ENCODE measurements at regions of chr20 and their contacts with region 1.

Region 1: DNA sequence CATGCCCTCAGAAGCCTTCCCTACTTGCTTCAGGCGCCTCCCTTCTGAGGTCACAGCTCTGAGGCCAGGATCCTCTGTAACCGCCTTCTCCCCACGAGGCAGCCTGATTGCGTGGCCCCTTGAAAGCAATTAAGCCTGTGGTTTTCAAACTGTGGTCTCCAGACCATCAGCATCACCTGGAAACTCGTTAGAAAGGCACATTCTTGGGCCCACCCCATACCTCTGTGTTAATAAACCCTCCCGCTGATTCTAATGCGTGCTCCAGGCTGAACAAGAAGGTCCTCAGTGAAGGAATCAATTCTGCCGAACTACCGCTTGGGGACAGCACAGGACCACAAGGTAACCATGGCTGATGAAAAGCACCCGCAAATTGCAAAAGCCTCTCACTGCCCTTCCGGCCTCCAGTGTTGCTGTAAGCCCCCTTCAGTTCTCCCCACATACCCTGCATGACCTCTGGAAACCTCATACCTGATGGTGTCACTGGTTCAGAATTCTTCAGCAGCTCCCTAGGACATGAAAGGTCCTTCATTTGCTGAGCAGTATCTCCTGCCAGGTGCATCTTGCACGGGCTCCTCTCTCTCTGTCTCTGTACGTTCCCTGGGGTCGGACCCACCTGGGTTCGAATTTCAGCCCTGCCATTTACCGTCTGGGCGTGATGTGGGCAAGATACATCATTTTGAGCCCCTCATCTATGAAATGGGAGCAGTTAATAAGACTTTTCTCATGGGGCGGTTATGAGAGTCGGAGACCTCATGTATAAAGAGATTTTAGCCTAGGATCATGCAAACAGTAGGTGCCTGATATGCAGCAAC is 93.3 kb upstream of the RNF24 start:
- DNase-seq: peak; percentile 11 to 80 (median 41)
- ATAC-seq: peak; percentile 84 to 87 (median 86)
- H3K4me3 ChIP-seq: no peak overlapping the region
- H3K4me3 Mint-ChIP-seq: no peak overlapping the region
- H3K27ac ChIP-seq: no peak overlapping the region
- H3K27ac Mint-ChIP-seq: no peak overlapping the region
- H3K4me1 ChIP-seq: peaks cover 0 to 6% of the 10 kb centered on the region in 2 experiments
- H3K4me1 Mint-ChIP-seq: peaks cover 0 to 11% (median 4%) of the 10 kb centered on the region in 3 donors
- H3K27me3 ChIP-seq: peaks cover 0 to 31% of the 10 kb centered on the region in 2 experiments
- H3K27me3 Mint-ChIP-seq: peaks cover 0 to 4% of the 10 kb centered on the region in 2 donors

Region 2: DNA sequence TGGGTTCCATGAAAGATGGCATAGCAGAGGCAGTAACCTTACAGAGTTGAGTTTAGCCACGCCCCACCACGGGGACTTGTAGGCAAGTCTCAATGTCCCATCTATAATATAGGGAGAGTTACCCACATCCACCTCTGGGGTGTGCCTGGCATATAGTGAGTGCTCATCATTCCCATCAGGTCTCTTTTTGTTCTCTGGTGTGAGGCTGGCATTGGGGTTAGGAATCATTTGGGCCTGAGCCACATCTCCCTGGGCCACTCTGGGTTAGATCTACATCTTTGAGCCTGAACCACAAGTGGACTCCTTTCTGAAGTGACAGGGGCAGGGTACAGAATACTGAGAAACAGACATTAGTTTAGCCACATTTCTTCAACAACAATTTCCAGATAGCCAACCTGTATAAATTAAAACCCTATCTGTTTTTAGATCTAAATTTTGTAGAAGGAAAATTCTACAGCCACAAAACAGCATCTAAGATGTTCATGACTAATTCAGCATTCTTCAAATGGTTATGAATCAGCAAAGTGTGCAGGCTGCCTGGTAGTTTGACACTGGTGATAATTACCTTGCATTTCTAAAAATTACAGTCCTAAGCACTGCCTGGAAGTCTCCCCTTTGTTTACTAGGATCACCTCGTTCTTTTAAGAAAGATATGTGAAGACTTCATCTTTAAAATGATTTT is 113.5 kb before region 1 on chr20:
- CTCF ChIA-PET with region 1: no interaction called
- POLR2A ChIA-PET with region 1: no interaction called
- DNase-seq: peak in 6 of 35 experiments; percentile 7 to 34 (median 15)
- ATAC-seq: peak; percentile 37 to 72 (median 61)
- H3K4me3 ChIP-seq: no peak overlapping the region
- H3K4me3 Mint-ChIP-seq: no peak overlapping the region
- H3K27ac ChIP-seq: no peak overlapping the region
- H3K27ac Mint-ChIP-seq: peak overlapping the region; percentile 79 to 81
- H3K4me1 ChIP-seq: peaks cover 15% of the 10 kb centered on the region in 2 experiments
- H3K4me1 Mint-ChIP-seq: peaks cover 31 to 56% (median 54%) of the 10 kb centered on the region in 3 donors
- H3K27me3 ChIP-seq: no peaks in the 10 kb centered on the region
- H3K27me3 Mint-ChIP-seq: no peaks in the 10 kb centered on the region

Region 3: GRCh38 chr20:4006640-4007039 is 102.1 kb before region 1 on chr20:
- CTCF ChIA-PET with region 1: no interaction called
- POLR2A ChIA-PET with region 1: no interaction called
- DNase-seq: no peak
- ATAC-seq: no peak
- H3K4me3 ChIP-seq: no peak overlapping the region
- H3K4me3 Mint-ChIP-seq: no peak overlapping the region
- H3K27ac ChIP-seq: no peak overlapping the region
- H3K27ac Mint-ChIP-seq: no peak overlapping the region
- H3K4me1 ChIP-seq: peaks cover 2 to 3% of the 10 kb centered on the region in 2 experiments
- H3K4me1 Mint-ChIP-seq: peaks cover 17 to 41% (median 25%) of the 10 kb centered on the region in 3 donors
- H3K27me3 ChIP-seq: no peaks in the 10 kb centered on the region
- H3K27me3 Mint-ChIP-seq: no peaks in the 10 kb centered on the region

Region 4: DNA sequence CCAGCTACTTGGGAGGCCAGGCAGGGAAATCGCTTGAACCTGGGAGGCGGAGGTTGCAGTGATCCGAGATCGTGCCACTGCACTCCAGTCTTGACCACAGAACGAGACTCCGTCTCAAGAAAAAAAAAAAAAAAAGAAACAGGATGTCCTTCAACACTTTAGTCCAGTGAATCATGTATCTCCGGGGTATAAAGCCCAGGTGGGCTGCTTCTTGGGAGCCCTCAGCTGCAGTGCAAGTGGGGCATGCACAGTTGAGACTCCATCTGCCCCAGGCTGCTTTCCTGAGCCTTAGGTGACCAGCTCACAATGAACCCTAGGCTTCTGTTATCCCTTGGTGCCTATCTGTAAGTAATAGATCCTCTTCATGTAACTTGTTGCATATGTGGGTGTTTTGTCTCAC is 93.7 kb after region 1 on chr20:
- CTCF ChIA-PET with region 1: interaction called in 1 of 2 experiments, 14 read pairs
- POLR2A ChIA-PET with region 1: no interaction called
- DNase-seq: no peak
- ATAC-seq: no peak
- H3K4me3 ChIP-seq: no peak overlapping the region
- H3K4me3 Mint-ChIP-seq: no peak overlapping the region
- H3K27ac ChIP-seq: no peak overlapping the region
- H3K27ac Mint-ChIP-seq: no peak overlapping the region
- H3K4me1 ChIP-seq: no peaks in the 10 kb centered on the region
- H3K4me1 Mint-ChIP-seq: no peaks in the 10 kb centered on the region
- H3K27me3 ChIP-seq: peaks cover 0 to 9% of the 10 kb centered on the region in 2 experiments
- H3K27me3 Mint-ChIP-seq: peaks cover 2 to 4% of the 10 kb centered on the region in 2 donors

Measured in T-cell (primary cell).